Activated naive CD4-positive, alpha-beta T cell treated with anti-CD3 and anti-CD28 coated beads for 36 hours (primary cell): ENCODE measurements at regions of chr17 and their contacts with region 1.

Region 1: DNA sequence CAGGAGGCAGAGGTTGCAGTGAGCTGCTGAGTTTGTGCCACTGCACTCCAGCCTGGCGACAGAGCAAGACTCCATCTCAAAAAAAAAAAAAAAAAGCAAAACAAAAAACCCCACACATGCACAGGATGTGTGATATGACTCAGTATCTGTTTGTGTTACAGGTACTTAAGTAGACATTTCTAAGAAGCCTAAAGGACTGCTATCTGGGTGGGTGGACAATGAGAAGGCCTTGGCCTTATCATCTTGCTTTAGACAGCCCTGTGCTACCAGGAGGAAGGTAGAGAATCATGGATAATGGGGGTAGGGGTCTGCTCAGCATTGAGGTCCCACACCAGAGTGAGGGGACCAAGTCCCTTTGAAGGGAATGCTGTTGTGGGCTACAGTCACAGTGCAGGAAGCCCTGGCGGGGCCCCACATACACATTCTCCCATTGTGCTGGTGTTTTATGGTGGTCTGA is 26.7 kb downstream of the PLD6 start:
- DNase-seq: peak; percentile 35
- H3K4me3 Mint-ChIP-seq: peak overlapping the region; percentile 22
- H3K27ac Mint-ChIP-seq: peak overlapping the region; percentile 88
- H3K4me1 Mint-ChIP-seq: peaks cover 91% of the 10 kb centered on the region
- H3K27me3 Mint-ChIP-seq: no peaks in the 10 kb centered on the region

Region 2: GRCh38 chr17:17041571-17042380 is 137.6 kb before region 1 on chr17:
- CTCF ChIA-PET with region 1: no interaction called
- intact Hi-C with region 1: loop called (anchors 5 kb)
- DNase-seq: peak; percentile 97
- H3K4me3 Mint-ChIP-seq: peak overlapping the region; percentile 60
- H3K27ac Mint-ChIP-seq: no peak overlapping the region
- H3K4me1 Mint-ChIP-seq: peaks cover 45% of the 10 kb centered on the region
- H3K27me3 Mint-ChIP-seq: no peaks in the 10 kb centered on the region

Region 3: GRCh38 chr17:17055286-17056155 is 123.9 kb before region 1 on chr17:
- CTCF ChIA-PET with region 1: no interaction called
- intact Hi-C with region 1: no loop called
- DNase-seq: no peak
- H3K4me3 Mint-ChIP-seq: no peak overlapping the region
- H3K27ac Mint-ChIP-seq: no peak overlapping the region
- H3K4me1 Mint-ChIP-seq: peaks cover 30% of the 10 kb centered on the region
- H3K27me3 Mint-ChIP-seq: no peaks in the 10 kb centered on the region

Region 4: DNA sequence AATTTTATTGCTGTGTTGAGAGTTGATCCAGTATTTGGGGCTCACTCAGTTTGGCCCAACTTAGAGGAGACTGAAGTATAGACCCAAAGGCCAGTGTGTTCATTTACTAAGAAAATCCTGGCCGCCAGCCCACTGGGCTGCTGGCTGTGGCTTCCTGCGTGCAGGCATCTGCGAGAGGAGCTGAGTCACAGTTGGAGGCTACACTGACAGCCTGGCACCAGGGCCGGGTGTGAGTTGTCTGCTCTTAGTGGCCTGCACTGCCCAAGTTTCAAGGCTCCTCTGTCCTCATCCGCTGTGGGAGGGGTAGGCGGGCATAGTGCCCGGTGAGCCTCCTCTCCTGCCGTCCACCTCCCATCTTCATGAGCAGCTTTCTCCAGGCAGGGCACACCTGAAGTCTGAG is 27.4 kb before region 1 on chr17:
- CTCF ChIA-PET with region 1: interaction called, 3 read pairs
- intact Hi-C with region 1: loop called (anchors 1 kb)
- DNase-seq: peak; percentile 31
- H3K4me3 Mint-ChIP-seq: no peak overlapping the region
- H3K27ac Mint-ChIP-seq: no peak overlapping the region
- H3K4me1 Mint-ChIP-seq: peaks cover 49% of the 10 kb centered on the region
- H3K27me3 Mint-ChIP-seq: no peaks in the 10 kb centered on the region

Region 5: DNA sequence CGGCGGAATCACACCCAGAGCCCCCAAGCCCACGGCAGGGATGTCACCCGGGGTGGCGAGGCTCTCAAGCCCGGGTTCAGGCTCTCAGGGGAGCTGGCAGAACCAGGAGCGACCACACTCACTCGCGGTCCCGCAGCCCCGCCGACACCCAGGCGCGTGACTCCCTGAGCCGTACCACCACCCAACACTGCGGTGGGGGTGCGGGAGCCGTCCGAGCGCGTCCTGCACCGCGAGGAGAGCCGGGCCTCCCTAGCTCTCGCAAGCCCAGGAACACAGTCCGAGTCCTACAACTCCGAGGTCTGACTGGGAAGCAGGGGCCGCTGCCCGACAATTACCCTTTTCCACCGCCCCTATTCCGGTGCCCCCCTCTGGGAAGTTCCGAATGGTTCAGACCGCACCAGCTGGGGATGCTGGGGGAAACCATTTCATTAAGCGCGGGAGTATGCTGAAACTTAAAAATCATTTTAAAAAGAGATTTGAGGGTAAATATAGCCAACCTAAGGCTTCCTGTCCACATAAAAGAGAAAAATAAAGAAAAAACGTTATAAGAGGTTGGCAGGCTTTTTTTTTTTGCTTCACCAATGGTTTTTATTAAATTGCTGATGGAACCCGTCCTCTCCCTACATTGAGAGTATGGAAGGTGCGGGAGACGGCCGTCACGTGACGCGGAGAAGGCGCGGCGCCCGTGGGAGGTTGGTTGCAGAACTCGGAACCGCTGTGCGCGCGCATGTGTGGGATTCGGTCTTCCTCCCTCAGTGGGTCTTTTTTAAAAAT is 57.8 kb after region 1 on chr17 and contains the start of gene FLCN:
- CTCF ChIA-PET with region 1: no interaction called
- intact Hi-C with region 1: loop called (anchors 2 kb)
- DNase-seq: peak; percentile 88
- H3K4me3 Mint-ChIP-seq: peak within 1 kb of the TSS; percentile 91
- H3K27ac Mint-ChIP-seq: peak within 1 kb of the TSS; percentile 95
- H3K4me1 Mint-ChIP-seq: peaks cover 31% of the 10 kb centered on the region
- H3K27me3 Mint-ChIP-seq: no peaks in the 10 kb centered on the region
- total RNA-seq, gene FLCN: 17.5 to 18.4 TPM

Region 6: DNA sequence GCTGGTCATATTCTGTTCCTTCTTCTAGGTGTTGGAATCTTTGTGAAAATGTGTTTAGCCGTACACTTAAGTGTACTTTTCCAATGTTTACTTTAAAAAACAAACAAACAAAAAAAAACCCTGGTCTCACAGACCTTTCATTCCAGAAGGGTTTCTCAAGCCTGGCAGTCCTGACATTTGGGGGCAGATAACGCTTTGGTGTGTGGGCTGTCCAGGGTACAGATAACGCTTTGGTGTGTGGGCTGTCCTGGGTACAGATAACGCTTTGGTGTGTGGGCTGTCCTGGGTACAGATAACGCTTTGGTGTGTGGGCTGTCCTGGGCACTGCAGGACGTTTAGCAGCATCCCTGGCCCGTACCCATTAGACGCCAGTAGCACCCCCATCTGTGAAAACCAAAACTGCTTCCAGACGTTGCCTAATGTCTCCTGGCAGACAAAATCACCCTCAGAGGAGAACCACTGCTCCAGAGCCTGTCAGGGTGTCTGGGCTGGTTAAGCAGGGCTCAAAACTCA is 72.8 kb after region 1 on chr17:
- CTCF ChIA-PET with region 1: no interaction called
- intact Hi-C with region 1: no loop called
- DNase-seq: no peak
- H3K4me3 Mint-ChIP-seq: no peak overlapping the region
- H3K27ac Mint-ChIP-seq: no peak overlapping the region
- H3K4me1 Mint-ChIP-seq: no peaks in the 10 kb centered on the region
- H3K27me3 Mint-ChIP-seq: no peaks in the 10 kb centered on the region

Region 7: DNA sequence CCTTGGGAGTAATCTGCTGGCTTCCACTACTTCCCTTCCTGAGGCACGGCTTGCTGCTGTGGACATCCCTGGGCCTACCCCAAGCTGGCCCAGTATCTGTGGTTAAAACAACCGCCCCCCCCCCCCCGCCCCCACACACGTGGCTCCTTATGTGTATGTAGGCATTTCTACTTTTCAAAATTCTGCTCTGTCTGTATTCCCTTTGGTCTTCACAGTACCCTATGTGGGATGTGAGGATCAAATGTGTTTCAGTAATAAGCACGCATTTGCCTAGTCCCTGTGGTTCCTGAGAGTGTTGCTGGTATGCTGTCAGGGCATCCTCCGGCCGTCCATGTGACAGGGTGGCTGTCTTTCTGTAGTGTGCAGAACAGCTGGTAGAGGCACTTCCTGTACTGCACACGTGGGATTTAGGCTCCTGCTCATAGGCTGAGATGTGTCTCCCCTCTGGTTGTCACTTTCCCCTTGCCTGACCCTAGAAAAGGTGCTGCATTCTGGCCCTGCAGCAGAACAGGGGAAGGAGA is 125.9 kb after region 1 on chr17:
- CTCF ChIA-PET with region 1: no interaction called
- intact Hi-C with region 1: loop called (anchors 1 kb)
- DNase-seq: peak; percentile 68
- H3K4me3 Mint-ChIP-seq: peak overlapping the region; percentile 61
- H3K27ac Mint-ChIP-seq: peak overlapping the region; percentile 37
- H3K4me1 Mint-ChIP-seq: peaks cover 28% of the 10 kb centered on the region
- H3K27me3 Mint-ChIP-seq: no peaks in the 10 kb centered on the region